Activated CD4-positive, alpha-beta T cell treated with anti-CD3 and anti-CD28 coated beads for 36 hours (primary cell): ENCODE measurements at regions of chr2 and their contacts with region 1.

Region 1: GRCh38 chr2:66434679-66435548 is at the start of gene MEIS1:
- DNase-seq: peak; percentile 66
- ATAC-seq: peak; percentile 78
- H3K4me3 Mint-ChIP-seq: peak within 1 kb of the TSS; percentile 65
- H3K27ac Mint-ChIP-seq: no peak within 1 kb of the TSS
- H3K4me1 Mint-ChIP-seq: peaks cover 34% of the 10 kb centered on the region
- H3K27me3 Mint-ChIP-seq: peaks cover 75% of the 10 kb centered on the region
- total RNA-seq, gene MEIS1: not detected

Region 2: GRCh38 chr2:66461664-66462500 is 27.0 kb after region 1 on chr2:
- CTCF ChIA-PET with region 1: no interaction called
- POLR2A ChIA-PET with region 1: no interaction called
- intact Hi-C with region 1: no loop called
- DNase-seq: no peak
- ATAC-seq: no peak
- H3K4me3 Mint-ChIP-seq: no peak overlapping the region
- H3K27ac Mint-ChIP-seq: no peak overlapping the region
- H3K4me1 Mint-ChIP-seq: no peaks in the 10 kb centered on the region
- H3K27me3 Mint-ChIP-seq: no peaks in the 10 kb centered on the region

Region 3: DNA sequence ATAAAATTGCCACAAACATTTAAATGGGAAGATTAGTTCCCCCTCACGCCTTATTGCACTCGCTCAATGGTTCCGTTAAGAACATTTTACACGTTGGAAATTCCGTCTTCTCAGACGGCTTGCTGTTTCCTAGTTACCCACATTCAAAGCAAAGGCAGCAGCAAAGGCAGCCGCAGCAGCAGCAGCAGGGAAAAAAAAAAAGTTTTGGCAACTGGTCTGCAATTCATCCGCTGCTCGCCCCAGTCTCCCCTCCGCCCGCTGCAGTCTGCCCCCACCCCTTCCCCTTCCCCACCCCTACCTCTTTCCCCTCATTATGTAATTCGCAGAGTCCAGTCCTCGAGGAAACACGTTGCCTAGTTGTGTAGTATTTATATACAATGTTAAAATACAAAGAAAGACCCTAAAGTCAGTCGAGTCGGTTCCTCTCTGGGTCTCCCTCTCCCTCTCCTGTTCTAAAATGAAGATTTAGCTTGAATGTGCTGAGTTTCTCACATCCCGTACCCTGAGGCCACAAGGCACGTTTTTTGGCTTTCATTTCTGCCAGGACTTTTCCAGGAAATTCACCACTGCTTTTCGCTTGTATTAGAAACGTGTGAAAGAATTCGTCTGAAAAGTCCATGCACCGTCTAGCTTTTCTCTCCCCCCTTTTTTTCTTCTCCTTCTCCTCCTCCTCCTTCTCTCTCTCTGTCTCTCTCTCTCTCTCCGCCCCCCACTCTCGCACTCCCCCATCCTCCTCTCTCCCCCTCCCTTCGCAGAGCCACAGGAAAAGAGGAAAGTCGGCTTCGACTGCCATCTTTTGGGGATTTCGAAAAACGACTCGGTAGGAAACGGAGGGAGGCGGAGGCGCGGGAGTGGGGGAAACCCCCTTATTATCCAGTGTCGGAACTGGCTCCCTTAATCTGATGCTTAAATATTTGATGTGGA is 140.0 kb after region 1 on chr2:
- CTCF ChIA-PET with region 1: interaction called, 3 read pairs
- POLR2A ChIA-PET with region 1: no interaction called
- intact Hi-C with region 1: loop called in 1 of 2 experiments (anchors 5 kb)
- DNase-seq: peak; percentile 34
- ATAC-seq: no peak
- H3K4me3 Mint-ChIP-seq: no peak overlapping the region
- H3K27ac Mint-ChIP-seq: no peak overlapping the region
- H3K4me1 Mint-ChIP-seq: peaks cover 6% of the 10 kb centered on the region
- H3K27me3 Mint-ChIP-seq: peaks cover 49% of the 10 kb centered on the region

Region 4: GRCh38 chr2:66581339-66582103 is 146.6 kb after region 1 on chr2:
- CTCF ChIA-PET with region 1: interaction called, 3 read pairs
- POLR2A ChIA-PET with region 1: no interaction called
- intact Hi-C with region 1: loop called (anchors 2 to 5 kb)
- DNase-seq: no peak
- ATAC-seq: no peak
- H3K4me3 Mint-ChIP-seq: no peak overlapping the region
- H3K27ac Mint-ChIP-seq: no peak overlapping the region
- H3K4me1 Mint-ChIP-seq: peaks cover 4% of the 10 kb centered on the region
- H3K27me3 Mint-ChIP-seq: peaks cover 38% of the 10 kb centered on the region